Uterus (tissue), 4 donors: ENCODE measurements at regions of chr17 and their contacts with region 1.

Region 1: DNA sequence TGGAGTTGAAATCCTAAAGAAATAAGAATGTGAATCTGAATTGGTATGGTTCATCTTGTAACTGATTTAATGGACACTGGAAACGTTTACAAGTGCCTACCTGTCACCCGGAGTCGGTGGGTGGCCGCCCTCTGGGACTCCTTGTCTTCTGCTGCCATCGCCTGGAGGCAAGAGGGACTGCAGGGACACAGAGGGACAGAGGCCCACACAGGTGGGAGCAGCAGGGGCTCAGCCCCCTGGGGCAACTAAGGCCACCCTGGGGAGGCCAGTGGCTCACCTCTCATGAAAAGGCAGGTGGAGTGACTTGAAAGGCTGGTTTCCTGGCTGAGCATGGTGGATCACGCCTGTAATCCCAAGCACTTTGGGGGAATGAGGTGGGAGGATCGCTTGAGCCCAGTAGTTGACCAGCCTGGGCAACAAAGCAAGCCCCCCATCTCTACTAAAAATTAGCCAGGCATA is 23.2 kb downstream of the TMEM92 start:
- DNase-seq: peak; percentile 77 to 79
- H3K4me3 ChIP-seq: no peak overlapping the region
- H3K27ac ChIP-seq: no peak overlapping the region
- H3K4me1 ChIP-seq: no peaks in the 10 kb centered on the region
- H3K27me3 ChIP-seq: no peaks in the 10 kb centered on the region
- CTCF ChIP-seq: peak; percentile 91 to 99 (median 97)
- POLR2A ChIP-seq: no peak

Region 2: DNA sequence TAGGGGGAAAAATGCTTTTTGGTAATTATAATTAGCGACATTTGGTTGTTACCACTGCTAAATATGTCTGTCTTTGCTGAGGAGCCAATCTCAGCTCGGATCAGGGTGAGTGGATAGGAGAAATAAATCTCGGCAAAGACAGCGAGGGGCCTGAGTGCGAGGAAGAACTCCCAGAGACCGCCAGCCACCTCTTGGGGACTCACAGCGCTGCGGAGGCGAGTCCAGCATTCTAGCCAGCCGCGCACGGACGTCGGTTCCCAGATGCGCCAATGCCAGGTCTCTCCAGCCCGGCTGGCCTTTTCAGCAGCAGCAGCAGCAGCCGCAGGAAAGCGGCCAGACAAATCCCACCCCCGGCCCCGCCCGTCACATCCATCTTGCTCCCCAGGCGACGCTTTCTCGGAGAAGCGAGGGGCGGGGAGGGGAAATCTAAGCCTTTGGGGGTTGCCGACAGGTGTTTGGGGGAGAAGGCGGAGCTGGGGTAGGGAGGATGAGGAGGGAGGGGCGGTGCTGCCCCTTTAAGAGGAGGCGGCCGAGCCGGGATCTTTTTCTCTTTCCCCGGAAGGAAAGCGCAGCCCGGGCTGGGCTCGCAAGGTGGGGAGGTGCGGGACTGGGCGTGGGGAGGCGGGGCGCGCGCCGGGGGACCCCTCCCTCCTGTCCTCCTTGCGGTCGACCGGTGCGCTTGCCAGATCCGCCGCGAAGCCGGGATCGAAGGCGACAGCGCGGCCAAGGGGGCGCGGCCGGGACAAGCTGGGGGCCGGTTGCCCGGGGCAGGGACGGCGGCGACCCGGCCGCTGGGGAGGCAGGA is 241.8 kb before region 1 on chr17 and contains the start of gene ITGA3:
- intact Hi-C with region 1: no loop called
- DNase-seq: peak; percentile 71 to 75
- H3K4me3 ChIP-seq: peak within 1 kb of the TSS; percentile 54 to 65
- H3K27ac ChIP-seq: peak within 1 kb of the TSS; percentile 91 to 92
- H3K4me1 ChIP-seq: peaks cover 12 to 19% of the 10 kb centered on the region in 2 donors
- H3K27me3 ChIP-seq: no peaks in the 10 kb centered on the region
- CTCF ChIP-seq: peak in 2 of 4 experiments; percentile 4 to 30
- POLR2A ChIP-seq: peak in 1 of 2 donors; percentile 44
- total RNA-seq, gene ITGA3: 14.3 to 73.1 (median 33.4) TPM

Region 3: GRCh38 chr17:50170662-50171370 is 126.6 kb before region 1 on chr17:
- intact Hi-C with region 1: loop called (anchors 2 kb)
- DNase-seq: no peak
- H3K4me3 ChIP-seq: no peak overlapping the region
- H3K27ac ChIP-seq: peak overlapping the region in 1 of 2 donors; percentile 14
- H3K4me1 ChIP-seq: peaks cover 3 to 8% of the 10 kb centered on the region in 2 donors
- H3K27me3 ChIP-seq: no peaks in the 10 kb centered on the region
- CTCF ChIP-seq: no peak
- POLR2A ChIP-seq: no peak

Region 4: DNA sequence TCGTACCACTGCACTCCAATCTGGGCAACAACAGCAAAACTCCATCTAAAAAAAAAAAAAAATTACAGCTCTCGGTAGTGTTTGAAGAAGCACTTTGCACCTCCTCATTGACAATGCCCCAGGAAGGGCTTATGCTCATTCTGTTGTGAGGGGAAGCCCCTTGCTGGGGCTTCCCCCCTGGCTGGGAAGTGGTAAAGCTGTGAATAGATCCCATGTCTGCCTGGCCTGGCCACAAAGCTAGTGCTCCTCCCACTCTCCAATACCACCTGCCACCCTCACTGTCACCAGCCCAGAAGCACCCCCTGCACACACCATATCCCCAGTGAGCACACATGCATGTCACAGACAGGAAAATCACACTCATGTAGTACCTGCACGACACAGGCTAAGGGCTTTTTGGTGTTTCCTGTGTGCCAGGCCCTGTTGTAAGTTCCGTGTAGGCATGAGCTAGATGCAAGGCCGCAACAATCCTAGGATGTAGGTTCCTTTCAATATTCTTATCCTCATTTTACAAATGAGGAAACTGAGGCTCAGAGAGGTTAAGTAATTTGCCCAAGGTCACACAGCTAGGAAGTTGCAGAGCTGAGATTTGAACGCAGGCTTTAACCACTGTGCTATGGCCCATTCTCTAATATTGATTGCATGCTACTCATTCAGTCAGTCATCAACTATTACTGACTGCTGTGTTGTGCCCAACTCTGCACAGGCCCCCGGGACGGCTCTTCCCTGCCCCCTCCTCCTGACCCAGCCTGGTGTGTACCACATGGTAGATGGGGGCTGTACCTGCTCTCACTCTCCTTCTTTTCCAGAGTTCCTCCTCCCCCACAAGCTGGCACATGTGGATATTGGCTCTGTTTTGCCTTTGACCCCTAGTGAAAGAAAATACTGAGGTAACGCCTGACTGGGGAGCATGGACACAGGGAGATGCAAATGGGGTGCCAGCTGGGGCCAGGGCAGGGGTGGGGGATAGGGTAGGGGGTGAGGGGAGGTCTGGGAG is 84.1 kb before region 1 on chr17:
- intact Hi-C with region 1: no loop called
- DNase-seq: peak; percentile 23 to 34
- H3K4me3 ChIP-seq: no peak overlapping the region
- H3K27ac ChIP-seq: peak overlapping the region; percentile 96 to 98
- H3K4me1 ChIP-seq: peaks cover 21 to 31% of the 10 kb centered on the region in 2 donors
- H3K27me3 ChIP-seq: no peaks in the 10 kb centered on the region
- CTCF ChIP-seq: no peak
- POLR2A ChIP-seq: no peak